ENCODE measurements at regions of chr2 and their contacts with region 1.

Region 1: DNA sequence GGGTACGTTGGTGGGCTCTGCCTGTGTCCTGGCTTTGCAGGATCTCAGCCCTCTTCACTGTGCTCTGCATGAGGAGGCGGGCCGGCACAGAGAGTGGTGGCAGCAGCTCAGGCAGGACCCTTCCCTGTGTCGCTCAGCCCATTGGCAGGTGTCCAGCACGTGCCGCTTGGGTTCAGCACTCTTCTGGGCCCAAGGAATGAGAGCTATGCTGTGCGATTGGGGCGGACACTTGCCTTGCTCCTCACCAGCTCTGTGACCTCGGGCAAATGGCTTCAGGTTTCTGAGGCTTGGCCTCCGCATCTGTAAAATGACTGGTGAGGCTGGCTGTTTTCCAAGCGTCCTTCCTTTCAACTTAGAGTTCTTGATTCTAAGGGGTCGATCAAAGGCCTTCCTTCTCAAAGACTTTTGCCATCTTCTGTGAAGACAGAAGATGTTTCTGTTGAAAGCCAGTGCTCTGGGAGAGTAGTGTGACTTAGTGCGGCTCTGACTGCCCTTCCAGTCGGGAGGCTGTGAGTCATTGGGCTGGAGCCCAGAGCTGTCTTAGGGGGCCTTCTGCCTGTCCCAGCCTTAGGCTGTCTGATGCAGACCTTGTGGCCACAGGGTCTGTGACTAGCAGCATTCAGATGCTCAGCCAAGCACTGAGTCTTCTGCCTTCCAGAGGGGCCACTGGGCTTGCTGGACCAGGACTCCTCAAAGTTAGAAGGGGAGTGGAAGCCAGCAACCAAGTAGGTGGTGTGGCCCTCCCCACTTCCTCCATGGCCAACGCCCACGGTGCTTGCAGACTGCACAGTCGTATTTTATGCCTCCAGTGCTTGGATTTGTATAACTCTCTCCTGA is 35.7 kb downstream of the GLI2 start:
- DNase-seq: peak; percentile 43 to 45
- ATAC-seq: peak; percentile 51 to 88 (median 80)
- H3K4me3 ChIP-seq: no peak overlapping the region
- H3K27ac ChIP-seq: peak overlapping the region in 5 of 10 donors; percentile 9 to 71 (median 37)
- H3K4me1 ChIP-seq: peaks cover 0 to 35% (median 6%) of the 10 kb centered on the region in 9 donors
- H3K27me3 ChIP-seq: peaks cover 0 to 5% (median under 1%) of the 10 kb centered on the region in 7 donors
- CTCF ChIP-seq: no peak

Region 2: GRCh38 chr2:120867290-120868241 is 96.2 kb after region 1 on chr2:
- intact Hi-C with region 1: loop called in 1 of 10 experiments (anchors 10 kb)
- DNase-seq: peak; percentile 71 to 75
- ATAC-seq: peak; percentile 79 to 91 (median 86)
- H3K4me3 ChIP-seq: peak overlapping the region; percentile 12 to 52 (median 44)
- H3K27ac ChIP-seq: peak overlapping the region; percentile 26 to 85 (median 73)
- H3K4me1 ChIP-seq: peaks cover 0 to 37% (median 15%) of the 10 kb centered on the region in 9 donors
- H3K27me3 ChIP-seq: peaks cover 0 to 30% (median 14%) of the 10 kb centered on the region in 7 donors
- CTCF ChIP-seq: no peak

Region 3: GRCh38 chr2:120949027-120949956 is 178.0 kb after region 1 on chr2:
- intact Hi-C with region 1: no loop called
- DNase-seq: no peak
- ATAC-seq: peak in 1 of 8 donors; percentile 35
- H3K4me3 ChIP-seq: no peak overlapping the region
- H3K27ac ChIP-seq: no peak overlapping the region
- H3K4me1 ChIP-seq: no peaks in the 10 kb centered on the region
- H3K27me3 ChIP-seq: no peaks in the 10 kb centered on the region
- CTCF ChIP-seq: peak in 4 of 9 donors; percentile 14 to 37 (median 26)